ENCODE measurements at regions of chr9 and their contacts with region 1.

Region 1: GRCh38 chr9:116580853-116581252 is 106.3 kb upstream of the TRIM32 start:
- DNase-seq: no peak
- H3K4me3 ChIP-seq: no peak overlapping the region
- H3K27ac ChIP-seq: no peak overlapping the region
- H3K4me1 ChIP-seq: peaks cover 4% of the 10 kb centered on the region; the same call in 1 of the 2 replicates
- H3K27me3 ChIP-seq: no peaks in the 10 kb centered on the region

Region 2: GRCh38 chr9:116646661-116647512 is 66.0 kb after region 1 on chr9:
- in situ Hi-C with region 1: loop called (anchors 5 kb)
- DNase-seq: peak; percentile 70
- H3K4me3 ChIP-seq: no peak overlapping the region
- H3K27ac ChIP-seq: no peak overlapping the region
- H3K4me1 ChIP-seq: peaks cover 24% of the 10 kb centered on the region
- H3K27me3 ChIP-seq: no peaks in the 10 kb centered on the region

Measured in GM23248 (cell line).